PC-9 (cell line): ENCODE measurements at regions of chr14 and their contacts with region 1.

Region 1: GRCh38 chr14:50714450-50715073 is 46.5 kb upstream of the SAV1 start:
- DNase-seq: no peak
- H3K4me3 ChIP-seq: no peak overlapping the region
- H3K27ac ChIP-seq: no peak overlapping the region
- H3K4me1 ChIP-seq: no peaks in the 10 kb centered on the region
- H3K27me3 ChIP-seq: no peaks in the 10 kb centered on the region
- CTCF ChIP-seq: peak; percentile 35

Region 2: GRCh38 chr14:50335389-50335788 is 379.2 kb before region 1 on chr14:
- CTCF ChIA-PET with region 1: interaction called, 19 read pairs
- POLR2A ChIA-PET with region 1: no interaction called
- intact Hi-C with region 1: no loop called
- DNase-seq: no peak
- H3K4me3 ChIP-seq: no peak overlapping the region
- H3K27ac ChIP-seq: no peak overlapping the region
- H3K4me1 ChIP-seq: peaks cover 19% of the 10 kb centered on the region
- H3K27me3 ChIP-seq: no peaks in the 10 kb centered on the region
- CTCF ChIP-seq: no peak

Region 3: DNA sequence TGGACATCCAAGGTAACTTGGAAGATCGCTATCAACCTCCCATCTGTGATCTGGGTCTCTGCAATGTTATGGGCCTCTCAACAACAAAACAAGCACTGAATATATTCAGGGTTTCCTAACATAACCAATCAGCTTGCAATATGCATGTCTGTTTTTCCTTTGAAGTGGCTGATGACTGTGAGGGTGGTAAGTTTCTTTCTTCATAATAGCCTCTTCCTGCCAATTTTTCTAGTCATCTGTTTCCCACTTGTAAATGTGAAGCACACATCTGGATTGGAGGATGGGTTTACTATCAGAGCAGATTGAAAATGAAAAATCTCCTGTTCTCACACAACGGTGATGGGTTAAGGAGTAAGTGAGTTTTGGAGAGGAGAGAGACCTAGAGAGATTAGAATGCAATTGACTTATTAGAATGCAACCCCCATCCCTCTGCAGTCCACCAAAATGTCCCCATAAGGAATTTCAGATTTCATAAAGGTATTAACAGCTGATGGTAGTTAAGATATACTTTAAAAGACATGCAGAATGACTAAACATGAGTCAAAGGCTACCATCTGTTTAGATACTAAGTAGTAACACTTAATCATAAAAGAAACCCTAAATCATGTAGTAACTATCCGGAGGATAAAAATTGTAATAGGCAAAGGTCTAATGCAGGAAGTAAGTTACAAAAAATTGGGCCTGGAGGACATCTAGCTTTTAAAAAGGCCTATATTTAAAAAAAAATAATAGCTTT is 12.0 kb after region 1 on chr14:
- CTCF ChIA-PET with region 1: no interaction called
- POLR2A ChIA-PET with region 1: no interaction called
- intact Hi-C with region 1: no loop called
- DNase-seq: no peak
- H3K4me3 ChIP-seq: no peak overlapping the region
- H3K27ac ChIP-seq: no peak overlapping the region
- H3K4me1 ChIP-seq: no peaks in the 10 kb centered on the region
- H3K27me3 ChIP-seq: no peaks in the 10 kb centered on the region
- CTCF ChIP-seq: no peak